GM12878 (cell line): ENCODE measurements at regions of chr6 and their contacts with region 1.

Region 1: GRCh38 chr6:57316581-57317059 is 810 bp upstream of the PRIM2 start:
- DNase-seq: peak; percentile 83
- ATAC-seq: peak; percentile 88
- H3K4me3 ChIP-seq: peak overlapping the region; percentile 98
- H3K27ac ChIP-seq: peak overlapping the region; percentile 71
- H3K4me1 ChIP-seq: peaks cover 8% of the 10 kb centered on the region; the same call in 1 of the 2 replicates
- H3K27me3 ChIP-seq: no peaks in the 10 kb centered on the region
- CTCF ChIP-seq: peak; percentile 81 to 98 (median 86); a peak in 5 of 6 replicates
- EP300 ChIP-seq: no peak
- POLR2A ChIP-seq: peak; percentile 59
- RAD21 ChIP-seq: peak; percentile 100

Region 2: GRCh38 chr6:56890683-56891429 is 425.8 kb before region 1 on chr6:
- CTCF ChIA-PET with region 1: interaction called, 23 read pairs
- POLR2A ChIA-PET with region 1: interaction called, 4 read pairs
- RAD21 ChIA-PET with region 1: interaction called, 8 read pairs
- SMC1A ChIA-PET with region 1: interaction called, 3 read pairs
- in situ Hi-C with region 1: no loop called
- intact Hi-C with region 1: no loop called
- DNase-seq: peak; percentile 92
- ATAC-seq: peak; percentile 94
- H3K4me3 ChIP-seq: peak overlapping the region; percentile 43; the same call in 1 of the 2 replicates
- H3K27ac ChIP-seq: peak overlapping the region; percentile 95
- H3K4me1 ChIP-seq: peaks cover 30% of the 10 kb centered on the region
- H3K27me3 ChIP-seq: no peaks in the 10 kb centered on the region
- CTCF ChIP-seq: no peak
- EP300 ChIP-seq: peak; percentile 78 to 86; a peak in 3 of 4 replicates
- POLR2A ChIP-seq: no peak
- RAD21 ChIP-seq: no peak

Region 3: DNA sequence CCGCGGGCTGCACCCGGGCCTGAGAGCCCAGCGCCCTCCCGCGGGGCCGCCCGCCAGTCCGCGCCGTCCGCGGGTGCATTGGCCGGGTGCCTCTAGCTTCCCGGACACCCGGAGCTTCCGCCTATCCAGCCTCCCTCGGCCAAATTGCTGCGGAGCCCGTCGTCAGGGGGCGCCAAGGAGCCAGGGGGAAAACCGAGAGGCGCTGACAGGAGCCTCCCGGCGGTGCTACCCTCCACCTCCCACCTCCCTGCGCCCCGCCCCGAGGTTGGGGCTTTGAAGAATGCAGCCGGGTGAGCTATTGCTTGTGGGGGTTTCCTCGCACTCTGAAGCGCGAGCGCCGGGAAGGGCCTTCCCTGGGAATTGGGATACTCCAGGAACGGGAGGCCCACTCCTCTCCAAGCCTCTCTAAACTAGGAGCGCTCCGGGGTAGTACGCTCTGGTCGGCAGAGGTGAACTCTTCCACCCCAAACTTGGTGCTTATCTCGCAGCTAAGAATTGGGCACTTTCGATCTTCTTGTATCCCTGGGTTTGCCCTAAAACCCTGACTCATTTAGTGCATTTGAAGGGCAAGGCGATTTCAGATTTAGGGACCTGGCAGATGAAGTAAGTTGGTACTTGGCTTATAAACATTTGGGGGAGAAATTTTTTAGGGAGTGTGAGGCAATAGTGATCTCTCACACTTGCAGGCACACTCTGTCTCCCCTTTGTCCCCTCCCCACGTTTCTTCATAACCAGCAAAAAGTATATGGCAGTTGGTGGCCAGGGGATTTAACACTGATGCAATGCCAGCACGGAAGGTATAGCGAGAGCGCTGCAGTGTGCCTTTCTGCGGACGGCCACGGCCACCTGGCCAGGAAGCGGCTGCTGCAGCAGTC is 361.2 kb before region 1 on chr6:
- CTCF ChIA-PET with region 1: interaction called, 25 read pairs
- POLR2A ChIA-PET with region 1: no interaction called
- RAD21 ChIA-PET with region 1: interaction called, 8 read pairs
- SMC1A ChIA-PET with region 1: interaction called, 5 read pairs
- in situ Hi-C with region 1: no loop called
- intact Hi-C with region 1: loop called (anchors 2 kb)
- DNase-seq: peak; percentile 62
- ATAC-seq: peak; percentile 79
- H3K4me3 ChIP-seq: peak overlapping the region; percentile 79
- H3K27ac ChIP-seq: peak overlapping the region; percentile 91
- H3K4me1 ChIP-seq: peaks cover 17% of the 10 kb centered on the region
- H3K27me3 ChIP-seq: no peaks in the 10 kb centered on the region
- CTCF ChIP-seq: peak; percentile 75 to 90 (median 80)
- EP300 ChIP-seq: no peak
- POLR2A ChIP-seq: peak; percentile 60
- RAD21 ChIP-seq: peak; percentile 62

Region 4: DNA sequence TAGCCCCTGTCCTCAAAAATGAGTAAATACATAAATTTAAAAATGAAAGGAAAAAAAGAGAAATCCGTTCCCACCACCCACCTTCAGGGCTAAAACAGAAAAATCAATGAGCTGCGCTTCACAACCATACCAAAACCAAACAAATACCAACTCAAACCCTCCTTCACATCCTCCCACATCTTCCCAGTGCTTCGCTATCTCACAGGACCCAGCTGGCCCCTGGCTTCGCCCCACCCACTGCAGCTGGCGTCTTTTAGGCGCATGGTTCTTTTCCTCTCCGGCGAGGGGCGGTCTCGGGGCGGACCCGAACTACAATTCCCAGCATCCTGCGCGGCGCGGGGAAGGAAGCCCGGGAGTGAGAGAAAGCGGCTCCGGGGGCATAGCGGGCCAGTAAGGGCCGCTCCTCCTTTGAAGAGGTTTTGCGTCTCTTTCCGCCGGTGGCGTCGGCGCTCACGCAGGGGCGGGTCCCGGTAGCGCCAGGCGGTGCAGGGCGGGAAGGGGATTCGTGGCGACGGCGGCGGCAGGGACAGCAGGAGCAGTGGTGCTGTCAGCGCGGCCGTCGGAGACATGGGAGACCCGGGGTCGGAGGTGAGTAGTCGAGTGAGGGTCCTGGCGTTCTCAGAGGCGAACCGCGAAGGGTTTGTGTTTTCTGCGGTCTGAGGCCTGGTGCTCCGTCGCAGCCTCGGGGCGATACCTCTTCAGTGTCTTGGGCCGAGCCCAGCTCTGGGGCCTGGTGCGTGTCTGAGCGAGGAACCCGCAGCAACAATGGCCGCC is 226.7 kb before region 1 on chr6 and contains the start of gene ZNF451:
- CTCF ChIA-PET with region 1: interaction called, 20 read pairs
- POLR2A ChIA-PET with region 1: no interaction called
- RAD21 ChIA-PET with region 1: interaction called, 4 read pairs
- SMC1A ChIA-PET with region 1: interaction called, 3 read pairs
- in situ Hi-C with region 1: no loop called
- intact Hi-C with region 1: loop called (anchors 5 kb)
- DNase-seq: peak; percentile 80
- ATAC-seq: peak; percentile 94
- H3K4me3 ChIP-seq: peak within 1 kb of the TSS; percentile 66
- H3K27ac ChIP-seq: peak within 1 kb of the TSS; percentile 71
- H3K4me1 ChIP-seq: peaks cover 8% of the 10 kb centered on the region
- H3K27me3 ChIP-seq: no peaks in the 10 kb centered on the region
- CTCF ChIP-seq: no peak
- EP300 ChIP-seq: no peak
- POLR2A ChIP-seq: peak; percentile 87
- RAD21 ChIP-seq: no peak
- polyA plus RNA-seq, gene ZNF451: 6.5 to 11.6 TPM

Region 5: GRCh38 chr6:57108691-57109090 is 207.9 kb before region 1 on chr6:
- CTCF ChIA-PET with region 1: no interaction called
- POLR2A ChIA-PET with region 1: no interaction called
- RAD21 ChIA-PET with region 1: interaction called, 3 read pairs
- SMC1A ChIA-PET with region 1: interaction called, 4 read pairs
- in situ Hi-C with region 1: loop called (anchors 10 kb)
- intact Hi-C with region 1: no loop called
- DNase-seq: peak; percentile 38
- ATAC-seq: peak; percentile 97
- H3K4me3 ChIP-seq: no peak overlapping the region
- H3K27ac ChIP-seq: peak overlapping the region; percentile 17; the same call in 1 of the 2 replicates
- H3K4me1 ChIP-seq: peaks cover 13% of the 10 kb centered on the region
- H3K27me3 ChIP-seq: no peaks in the 10 kb centered on the region
- CTCF ChIP-seq: no peak
- EP300 ChIP-seq: peak in 1 of 2 experiments; percentile 68; a peak in 1 of 4 replicates
- POLR2A ChIP-seq: no peak
- RAD21 ChIP-seq: peak; percentile 19; the same call in 1 of the 2 replicates

Region 6: GRCh38 chr6:57190140-57190539 is 126.5 kb before region 1 on chr6:
- CTCF ChIA-PET with region 1: interaction called, 16 read pairs
- POLR2A ChIA-PET with region 1: no interaction called
- RAD21 ChIA-PET with region 1: interaction called, 10 read pairs
- SMC1A ChIA-PET with region 1: interaction called, 6 read pairs
- in situ Hi-C with region 1: no loop called
- intact Hi-C with region 1: loop called (anchors 5 kb)
- DNase-seq: no peak
- ATAC-seq: peak; percentile 48
- H3K4me3 ChIP-seq: no peak overlapping the region
- H3K27ac ChIP-seq: no peak overlapping the region
- H3K4me1 ChIP-seq: no peaks in the 10 kb centered on the region
- H3K27me3 ChIP-seq: no peaks in the 10 kb centered on the region
- CTCF ChIP-seq: peak in 2 of 3 experiments; percentile 15 to 27; a peak in 2 of 6 replicates
- EP300 ChIP-seq: no peak
- POLR2A ChIP-seq: no peak
- RAD21 ChIP-seq: peak; percentile 59

Region 7: DNA sequence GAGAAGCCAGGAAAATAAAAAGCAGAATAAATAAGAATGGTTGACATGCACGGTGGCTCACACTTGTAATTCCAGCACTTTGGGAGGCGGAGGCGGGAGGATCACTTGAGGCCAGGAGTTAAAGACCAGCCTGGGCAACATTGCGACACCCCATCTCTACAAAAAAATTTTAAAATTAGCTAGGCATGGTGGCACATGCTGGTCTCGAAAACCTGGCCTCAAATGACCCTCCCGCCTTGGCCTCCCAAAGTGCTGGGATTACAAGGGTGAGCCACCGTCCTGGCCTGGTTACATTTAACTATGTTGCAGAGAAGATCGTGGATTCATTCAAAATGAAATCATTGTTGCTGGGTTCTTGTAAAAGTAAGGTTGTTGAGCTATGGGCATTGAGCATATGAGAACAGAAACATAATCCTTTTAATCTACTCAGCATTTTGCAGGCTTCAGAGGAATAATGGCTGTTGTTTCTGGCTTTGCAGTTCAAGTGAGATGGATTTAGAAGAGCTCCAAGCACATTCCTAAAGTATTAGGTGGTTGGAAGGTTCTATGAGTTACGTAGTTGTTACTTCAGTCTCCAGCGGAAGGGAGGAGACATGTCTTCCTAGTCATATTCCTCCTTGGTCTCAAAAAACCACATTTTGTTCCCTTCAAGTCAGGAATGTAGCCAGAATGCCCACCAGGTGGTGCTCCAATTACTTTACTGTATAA is 48.9 kb before region 1 on chr6:
- CTCF ChIA-PET with region 1: interaction called, 40 read pairs
- POLR2A ChIA-PET with region 1: no interaction called
- RAD21 ChIA-PET with region 1: no interaction called
- SMC1A ChIA-PET with region 1: interaction called, 21 read pairs
- in situ Hi-C with region 1: no loop called
- intact Hi-C with region 1: loop called (anchors 1 kb)
- DNase-seq: peak; percentile 8
- ATAC-seq: peak; percentile 58; the same call in 2 of the 3 replicates
- H3K4me3 ChIP-seq: no peak overlapping the region
- H3K27ac ChIP-seq: no peak overlapping the region
- H3K4me1 ChIP-seq: no peaks in the 10 kb centered on the region
- H3K27me3 ChIP-seq: no peaks in the 10 kb centered on the region
- CTCF ChIP-seq: peak; percentile 36 to 49 (median 45); a peak in 5 of 6 replicates
- EP300 ChIP-seq: no peak
- POLR2A ChIP-seq: no peak
- RAD21 ChIP-seq: peak; percentile 58